Activated CD8-positive, alpha-beta T cell treated with anti-CD3 and anti-CD28 coated beads for 36 hours (primary cell): ENCODE measurements at regions of chr1 and their contacts with region 1.

Region 1: GRCh38 chr1:11645670-11646265 is 8.5 kb downstream of the FBXO2 start:
- DNase-seq: peak; percentile 92
- ATAC-seq: peak; percentile 46
- H3K4me3 Mint-ChIP-seq: no peak overlapping the region
- H3K27ac Mint-ChIP-seq: no peak overlapping the region
- H3K4me1 Mint-ChIP-seq: peaks cover 11% of the 10 kb centered on the region
- H3K27me3 Mint-ChIP-seq: no peaks in the 10 kb centered on the region
- CTCF ChIP-seq: peak; percentile 85

Region 2: DNA sequence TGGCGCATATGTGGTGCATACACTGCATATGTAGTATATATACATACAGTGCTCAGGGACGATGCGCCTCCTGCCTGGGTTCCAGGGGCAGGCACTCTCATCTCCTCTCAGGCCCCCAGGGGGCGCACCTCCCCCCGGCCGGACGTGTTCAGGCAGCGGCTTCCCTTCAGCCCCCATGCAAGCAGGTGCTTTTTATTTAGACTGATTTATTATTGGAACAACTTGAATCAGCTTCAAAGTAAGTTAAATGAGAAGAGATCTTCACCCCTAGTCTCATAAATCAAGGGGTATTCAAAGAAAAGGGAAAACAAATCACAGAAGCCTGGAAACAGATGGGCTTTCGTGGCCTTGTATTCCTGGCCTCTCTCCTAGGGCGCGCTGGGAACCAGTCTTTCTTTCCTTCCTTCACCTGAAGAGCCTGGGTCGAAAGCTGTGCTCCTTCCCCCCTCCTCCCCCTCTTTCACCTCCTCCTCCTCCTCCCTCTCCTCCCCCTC is 308.1 kb before region 1 on chr1:
- CTCF ChIA-PET with region 1: interaction called, 5 read pairs
- POLR2A ChIA-PET with region 1: no interaction called
- intact Hi-C with region 1: loop called (anchors 5 kb)
- DNase-seq: peak; percentile 85
- ATAC-seq: peak; percentile 90
- H3K4me3 Mint-ChIP-seq: no peak overlapping the region
- H3K27ac Mint-ChIP-seq: no peak overlapping the region
- H3K4me1 Mint-ChIP-seq: peaks cover 6% of the 10 kb centered on the region
- H3K27me3 Mint-ChIP-seq: peaks cover 18% of the 10 kb centered on the region
- CTCF ChIP-seq: peak; percentile 91

Region 3: GRCh38 chr1:11507309-11507708 is 138.5 kb before region 1 on chr1:
- CTCF ChIA-PET with region 1: no interaction called
- POLR2A ChIA-PET with region 1: no interaction called
- intact Hi-C with region 1: no loop called
- DNase-seq: no peak
- ATAC-seq: no peak
- H3K4me3 Mint-ChIP-seq: no peak overlapping the region
- H3K27ac Mint-ChIP-seq: no peak overlapping the region
- H3K4me1 Mint-ChIP-seq: no peaks in the 10 kb centered on the region
- H3K27me3 Mint-ChIP-seq: peaks cover 1% of the 10 kb centered on the region
- CTCF ChIP-seq: no peak

Region 4: DNA sequence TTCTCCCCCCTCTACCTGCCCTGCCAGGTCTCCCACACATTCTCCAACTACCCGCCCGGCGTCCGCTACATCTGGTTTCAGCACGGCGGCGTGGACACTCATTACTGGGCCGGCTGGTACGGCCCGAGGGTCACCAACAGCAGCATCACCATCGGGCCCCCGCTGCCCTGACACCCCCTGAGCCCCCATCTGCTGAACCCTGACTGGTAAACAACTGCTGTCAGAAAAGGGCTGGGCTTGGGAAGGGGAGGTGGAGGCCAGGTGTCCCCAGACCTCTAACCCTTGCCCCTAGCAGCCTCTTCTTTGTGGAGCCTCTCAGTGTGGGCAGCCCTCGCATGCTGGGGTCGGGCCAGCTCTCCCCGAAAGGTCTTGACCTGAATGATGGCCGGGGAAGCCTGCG is 15.3 kb after region 1 on chr1:
- CTCF ChIA-PET with region 1: interaction called, 66 read pairs
- POLR2A ChIA-PET with region 1: interaction called, 42 read pairs
- intact Hi-C with region 1: no loop called
- DNase-seq: no peak
- ATAC-seq: no peak
- H3K4me3 Mint-ChIP-seq: no peak overlapping the region
- H3K27ac Mint-ChIP-seq: no peak overlapping the region
- H3K4me1 Mint-ChIP-seq: peaks cover 3% of the 10 kb centered on the region
- H3K27me3 Mint-ChIP-seq: no peaks in the 10 kb centered on the region
- CTCF ChIP-seq: no peak

Region 5: DNA sequence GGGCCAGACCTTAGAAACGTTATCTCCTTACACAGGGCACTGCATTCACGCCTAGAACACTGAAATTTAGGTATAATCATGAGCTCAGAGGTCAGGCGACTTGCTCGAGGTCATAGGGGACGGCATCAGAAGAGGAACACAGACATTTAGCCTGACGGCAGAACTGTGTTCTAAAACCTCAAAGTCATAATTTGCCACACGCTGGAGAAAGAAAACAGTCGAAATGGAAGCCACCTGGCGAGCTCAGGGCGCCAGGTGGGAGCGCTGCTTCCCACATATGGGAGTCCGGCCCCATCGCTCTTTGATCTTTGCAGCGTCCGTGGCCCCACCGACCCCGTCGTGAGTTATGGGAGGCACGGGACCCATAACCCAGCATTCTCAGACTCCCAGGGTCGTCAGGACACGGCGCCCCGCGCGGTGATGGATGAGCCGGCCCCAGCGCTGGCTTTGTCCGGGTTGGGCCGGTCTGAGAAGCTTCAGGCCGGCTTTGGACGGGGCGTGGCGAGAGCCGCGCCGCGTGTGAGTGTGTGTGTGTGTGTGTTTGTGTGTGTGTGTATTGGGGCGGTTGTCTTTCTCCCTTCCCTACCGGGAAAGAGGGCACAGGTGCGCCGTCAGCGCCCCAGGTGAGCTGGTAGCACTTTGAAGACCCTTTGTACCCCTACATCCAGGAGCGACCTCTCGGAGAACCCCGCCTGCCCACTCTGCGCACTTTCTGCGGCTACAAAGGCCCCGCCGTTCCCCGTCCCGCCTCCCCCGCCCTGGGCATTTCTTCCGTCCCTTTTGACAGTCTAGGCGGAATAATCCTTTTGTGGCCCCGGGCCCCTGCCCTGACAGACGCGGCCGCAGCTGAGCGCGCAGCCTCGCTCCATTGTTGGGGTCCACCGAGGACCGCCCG is 44.9 kb after region 1 on chr1:
- CTCF ChIA-PET with region 1: interaction called, 11 read pairs
- POLR2A ChIA-PET with region 1: no interaction called
- intact Hi-C with region 1: no loop called
- DNase-seq: no peak
- ATAC-seq: no peak
- H3K4me3 Mint-ChIP-seq: peak overlapping the region; percentile 42
- H3K27ac Mint-ChIP-seq: no peak overlapping the region
- H3K4me1 Mint-ChIP-seq: peaks cover 22% of the 10 kb centered on the region
- H3K27me3 Mint-ChIP-seq: peaks cover 36% of the 10 kb centered on the region
- CTCF ChIP-seq: no peak

Region 6: GRCh38 chr1:11719313-11720032 is 73.7 kb after region 1 on chr1:
- CTCF ChIA-PET with region 1: interaction called, 136 read pairs
- POLR2A ChIA-PET with region 1: interaction called, 11 read pairs
- intact Hi-C with region 1: loop called (anchors 5 kb)
- DNase-seq: peak; percentile 93
- ATAC-seq: peak; percentile 87
- H3K4me3 Mint-ChIP-seq: peak overlapping the region; percentile 73
- H3K27ac Mint-ChIP-seq: peak overlapping the region; percentile 91
- H3K4me1 Mint-ChIP-seq: peaks cover 11% of the 10 kb centered on the region
- H3K27me3 Mint-ChIP-seq: no peaks in the 10 kb centered on the region
- CTCF ChIP-seq: peak; percentile 99